ENCODE measurements at regions of chr22 and their contacts with region 1.

Region 1: DNA sequence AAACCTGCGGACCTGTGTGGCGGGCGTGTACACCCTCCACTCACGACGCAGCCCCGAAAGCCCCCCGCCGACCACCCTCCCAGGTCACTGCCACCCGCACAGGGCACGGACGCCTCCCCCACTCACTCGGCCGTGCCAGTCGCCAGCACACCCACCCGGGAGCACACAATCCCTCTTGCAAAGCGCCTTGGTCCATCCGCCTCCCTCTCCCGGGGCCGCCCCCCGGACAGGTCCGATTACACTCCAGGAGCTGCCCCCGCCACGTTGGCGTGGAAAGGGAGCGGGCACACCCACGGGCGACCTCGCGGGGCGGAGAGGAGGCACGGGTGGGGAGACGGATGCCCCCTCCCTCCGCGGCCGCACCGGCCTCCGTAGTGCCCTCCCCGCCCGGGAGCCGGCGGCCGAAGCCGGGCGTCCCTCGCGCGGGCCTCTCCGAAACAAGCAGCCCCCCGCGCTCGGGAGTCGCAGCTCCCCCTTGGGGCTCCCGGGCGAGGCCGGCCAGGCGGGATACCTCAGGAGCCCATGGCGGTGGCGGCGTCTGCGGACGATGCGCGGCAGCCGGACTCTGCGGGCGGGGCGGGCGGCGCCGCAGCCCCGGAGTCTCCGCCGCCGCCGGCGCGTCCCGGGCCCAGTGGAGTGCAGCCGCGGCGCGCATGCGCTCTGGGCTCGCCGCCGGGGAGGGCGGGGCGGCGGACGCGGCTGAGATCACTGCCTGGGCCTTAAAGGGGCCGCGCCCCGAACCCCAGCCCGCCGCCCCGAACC is at the start of gene TMEM184B:
- DNase-seq: peak; percentile 83 to 93
- ATAC-seq: peak; percentile 93
- H3K4me3 ChIP-seq: peak within 1 kb of the TSS; percentile 78 to 86
- H3K27ac ChIP-seq: peak within 1 kb of the TSS; percentile 58 to 72
- H3K4me1 ChIP-seq: peaks cover 0 to 6% of the 10 kb centered on the region in 2 donors
- H3K27me3 ChIP-seq: no peaks in the 10 kb centered on the region
- total RNA-seq, gene TMEM184B: 96.3 to 96.9 TPM

Region 2: GRCh38 chr22:38317122-38317994 is 44.8 kb after region 1 on chr22 and contains the start of gene CSNK1E:
- intact Hi-C with region 1: loop called (anchors 2 to 5 kb)
- DNase-seq: peak; percentile 86 to 94
- ATAC-seq: peak; percentile 84
- H3K4me3 ChIP-seq: peak within 1 kb of the TSS; percentile 86 to 92
- H3K27ac ChIP-seq: peak within 1 kb of the TSS; percentile 94 to 95
- H3K4me1 ChIP-seq: peaks cover 0 to 2% of the 10 kb centered on the region in 2 donors
- H3K27me3 ChIP-seq: no peaks in the 10 kb centered on the region
- total RNA-seq, gene CSNK1E: 144 to 167 TPM

Region 3: DNA sequence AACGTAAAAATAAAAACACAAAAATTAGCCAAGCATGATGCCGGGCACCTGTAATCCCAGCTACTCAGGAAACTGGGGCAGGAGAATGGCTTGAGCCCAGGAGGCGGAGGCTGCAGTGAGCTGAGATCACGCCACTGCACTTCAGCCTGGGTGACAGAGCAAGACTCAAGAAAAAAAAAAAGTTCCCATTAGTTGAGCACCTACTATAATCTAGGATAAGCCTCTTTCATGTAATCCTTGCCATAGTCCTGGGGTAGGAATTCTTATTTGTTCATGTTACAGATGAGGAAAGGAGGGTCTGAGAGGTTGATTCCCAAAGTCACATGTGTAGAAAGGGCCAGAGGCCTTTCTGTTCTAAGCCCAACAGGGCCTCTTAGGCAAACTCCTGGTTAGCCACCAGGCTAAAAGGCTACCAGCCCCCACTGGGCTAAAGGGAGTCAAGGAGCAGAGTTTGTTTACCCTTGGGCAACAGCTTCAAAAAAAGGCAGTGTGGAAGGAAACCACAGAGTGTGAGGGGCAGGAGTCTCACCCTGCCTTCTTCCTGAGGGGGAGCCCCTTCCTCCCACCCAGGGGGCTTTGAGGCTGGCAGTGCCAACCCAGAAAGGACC is 66.3 kb after region 1 on chr22:
- intact Hi-C with region 1: no loop called
- DNase-seq: peak; percentile 9 to 15
- ATAC-seq: no peak
- H3K4me3 ChIP-seq: no peak overlapping the region
- H3K27ac ChIP-seq: no peak overlapping the region
- H3K4me1 ChIP-seq: peaks cover 0 to 5% of the 10 kb centered on the region in 2 donors
- H3K27me3 ChIP-seq: no peaks in the 10 kb centered on the region

Region 4: DNA sequence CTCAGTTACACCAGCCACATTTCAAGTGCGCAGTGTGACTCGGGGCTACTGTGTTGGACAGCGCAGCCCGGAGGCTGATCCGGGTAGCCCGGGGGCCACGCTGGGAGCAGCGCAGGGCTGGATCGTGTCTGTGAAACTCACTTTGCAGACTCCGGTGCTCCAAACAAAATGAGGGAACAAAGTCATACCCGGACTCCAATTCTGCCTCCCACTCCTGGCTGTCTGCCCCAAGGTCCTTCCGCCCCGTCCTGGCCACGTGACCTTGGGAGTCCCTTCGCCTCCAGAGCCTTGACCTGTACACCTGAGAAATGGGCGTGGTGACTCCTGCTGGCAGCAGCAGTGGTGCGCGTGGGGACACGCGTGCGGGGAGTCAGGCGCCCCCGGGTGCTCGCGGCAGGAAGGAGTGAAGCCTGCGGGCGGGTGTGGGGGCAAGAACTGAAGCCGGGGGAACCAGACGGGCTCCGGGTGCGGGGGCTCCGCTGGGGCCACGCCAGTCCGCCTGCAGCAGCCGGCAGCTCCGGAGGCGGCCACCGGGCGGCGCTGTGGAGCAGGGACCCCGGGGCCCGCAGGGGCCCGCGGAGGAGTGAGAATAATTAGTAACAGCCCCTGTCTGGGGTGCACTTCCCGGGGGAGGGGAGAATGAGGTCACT is 140.0 kb after region 1 on chr22:
- intact Hi-C with region 1: no loop called
- DNase-seq: peak in 1 of 2 donors; percentile 77
- ATAC-seq: peak; percentile 61
- H3K4me3 ChIP-seq: no peak overlapping the region
- H3K27ac ChIP-seq: no peak overlapping the region
- H3K4me1 ChIP-seq: no peaks in the 10 kb centered on the region
- H3K27me3 ChIP-seq: no peaks in the 10 kb centered on the region

Measured in aorta (tissue), 5 donors.